Gastrocnemius medialis (tissue), 4 donors: ENCODE measurements at regions of chr15 and their contacts with region 1.

Region 1: GRCh38 chr15:64460206-64460734 is at the start of gene ZNF609:
- DNase-seq: peak; percentile 85 to 91
- ATAC-seq: peak; percentile 84 to 90
- H3K4me3 ChIP-seq: peak within 1 kb of the TSS; percentile 71 to 76 (median 72)
- H3K27ac ChIP-seq: peak within 1 kb of the TSS; percentile 83 to 91 (median 88)
- H3K4me1 ChIP-seq: peaks cover 43 to 47% of the 10 kb centered on the region in 2 donors
- H3K27me3 ChIP-seq: no peaks in the 10 kb centered on the region
- CTCF ChIP-seq: peak in 2 of 5 experiments; percentile 19 to 32
- POLR2A ChIP-seq: peak; percentile 40 to 58
- total RNA-seq, gene ZNF609: 10.3 to 16.5 (median 12.4) TPM

Region 2: GRCh38 chr15:64387562-64388168 is 72.6 kb before region 1 on chr15 and contains the start of gene TRIP4:
- in situ Hi-C with region 1: no loop called
- intact Hi-C with region 1: loop called (anchors 5 kb)
- DNase-seq: peak; percentile 81 to 93
- ATAC-seq: peak; percentile 95 to 98
- H3K4me3 ChIP-seq: peak within 1 kb of the TSS; percentile 63 to 80 (median 78)
- H3K27ac ChIP-seq: peak within 1 kb of the TSS; percentile 55 to 82 (median 76)
- H3K4me1 ChIP-seq: peaks cover 0 to 4% of the 10 kb centered on the region in 2 donors
- H3K27me3 ChIP-seq: no peaks in the 10 kb centered on the region
- CTCF ChIP-seq: no peak
- POLR2A ChIP-seq: peak in 1 of 2 donors; percentile 20
- total RNA-seq, gene TRIP4: 1.9 to 5.3 (median 3.4) TPM

Region 3: GRCh38 chr15:64476550-64476949 is 16.3 kb after region 1 on chr15:
- in situ Hi-C with region 1: no loop called
- intact Hi-C with region 1: no loop called
- DNase-seq: no peak
- ATAC-seq: no peak
- H3K4me3 ChIP-seq: no peak overlapping the region
- H3K27ac ChIP-seq: no peak overlapping the region
- H3K4me1 ChIP-seq: peaks cover 0 to 4% of the 10 kb centered on the region in 2 donors
- H3K27me3 ChIP-seq: no peaks in the 10 kb centered on the region
- CTCF ChIP-seq: no peak
- POLR2A ChIP-seq: no peak

Region 4: GRCh38 chr15:64836023-64836536 is 375.8 kb after region 1 on chr15:
- in situ Hi-C with region 1: no loop called
- intact Hi-C with region 1: loop called (anchors 5 kb)
- DNase-seq: no peak
- ATAC-seq: peak; percentile 20 to 39
- H3K4me3 ChIP-seq: peak overlapping the region; percentile 23 to 45 (median 34)
- H3K27ac ChIP-seq: peak overlapping the region; percentile 44 to 76 (median 62)
- H3K4me1 ChIP-seq: peaks cover 10 to 11% of the 10 kb centered on the region in 2 donors
- H3K27me3 ChIP-seq: no peaks in the 10 kb centered on the region
- CTCF ChIP-seq: no peak
- POLR2A ChIP-seq: no peak